ENCODE measurements at regions of chr3 and their contacts with region 1.

Region 1: GRCh38 chr3:37812499-37812896 is 49.2 kb upstream of the CTDSPL start:
- DNase-seq: no peak
- ATAC-seq: no peak
- H3K4me3 ChIP-seq: no peak overlapping the region
- H3K27ac ChIP-seq: no peak overlapping the region
- H3K4me1 ChIP-seq: peaks cover 3% of the 10 kb centered on the region; the same call in 1 of the 2 replicates
- H3K27me3 ChIP-seq: no peaks in the 10 kb centered on the region; a peak in 1 of 4 replicates
- CTCF ChIP-seq: no peak
- EP300 ChIP-seq: no peak
- POLR2A ChIP-seq: no peak
- RAD21 ChIP-seq: no peak

Region 2: GRCh38 chr3:36876181-36876936 is 936.1 kb before region 1 on chr3:
- CTCF ChIA-PET with region 1: no interaction called
- POLR2A ChIA-PET with region 1: no interaction called
- RAD21 ChIA-PET with region 1: no interaction called
- SMC1A ChIA-PET with region 1: no interaction called
- in situ Hi-C with region 1: no loop called
- intact Hi-C with region 1: no loop called
- DNase-seq: peak; percentile 89
- ATAC-seq: peak; percentile 99
- H3K4me3 ChIP-seq: peak overlapping the region; percentile 12; the same call in 1 of the 2 replicates
- H3K27ac ChIP-seq: peak overlapping the region; percentile 45; the same call in 1 of the 2 replicates
- H3K4me1 ChIP-seq: peaks cover 11% of the 10 kb centered on the region
- H3K27me3 ChIP-seq: no peaks in the 10 kb centered on the region
- CTCF ChIP-seq: no peak
- EP300 ChIP-seq: peak; percentile 79 to 84; a peak in 3 of 4 replicates
- POLR2A ChIP-seq: no peak
- RAD21 ChIP-seq: no peak

Region 3: DNA sequence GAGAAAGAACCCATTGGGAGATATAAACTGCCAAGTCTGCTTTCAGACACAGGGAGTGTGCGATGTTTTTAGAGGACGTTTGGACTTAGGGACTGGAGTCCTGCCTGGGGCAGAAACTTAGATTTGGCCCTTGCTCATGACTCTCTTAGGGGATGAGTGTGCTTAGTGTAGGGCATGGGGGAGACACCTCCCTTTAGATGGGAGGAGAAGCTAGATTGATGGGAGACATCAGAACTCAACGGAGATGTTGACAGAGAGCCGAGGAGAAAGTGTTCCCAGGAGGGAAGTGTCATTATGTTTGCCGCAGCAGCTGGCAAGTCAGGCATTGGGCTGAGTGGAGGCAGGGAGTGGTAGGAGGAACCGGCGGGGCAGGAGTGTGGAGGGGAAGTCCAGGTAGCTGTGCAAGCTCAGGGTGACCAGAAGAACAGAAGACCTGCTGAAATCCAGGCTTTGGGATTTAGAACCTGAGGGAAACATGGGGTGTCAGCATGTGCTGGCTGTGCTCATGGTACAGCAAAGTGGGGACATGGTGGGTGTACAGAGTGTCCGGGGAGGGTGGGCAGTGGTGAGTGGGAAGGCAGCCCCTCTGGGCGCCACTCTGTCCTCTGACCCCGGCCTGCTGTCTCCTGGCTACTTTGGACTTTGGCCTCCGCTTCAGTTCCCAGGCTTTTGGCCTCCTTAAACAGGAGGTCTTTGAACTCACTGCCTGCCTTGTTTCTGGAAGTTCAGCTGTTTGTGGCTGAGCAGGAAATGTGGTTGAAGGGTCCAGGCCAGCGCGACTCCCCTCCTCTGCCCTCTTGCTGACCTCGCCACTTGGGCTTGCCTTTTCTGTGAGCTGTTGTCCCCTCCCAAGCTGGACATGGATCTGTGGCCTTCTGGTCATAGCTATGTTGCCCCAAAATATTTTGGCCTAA is 314.1 kb before region 1 on chr3:
- CTCF ChIA-PET with region 1: no interaction called
- POLR2A ChIA-PET with region 1: no interaction called
- RAD21 ChIA-PET with region 1: no interaction called
- SMC1A ChIA-PET with region 1: no interaction called
- in situ Hi-C with region 1: no loop called
- intact Hi-C with region 1: no loop called
- DNase-seq: no peak
- ATAC-seq: no peak
- H3K4me3 ChIP-seq: no peak overlapping the region
- H3K27ac ChIP-seq: no peak overlapping the region
- H3K4me1 ChIP-seq: no peaks in the 10 kb centered on the region
- H3K27me3 ChIP-seq: peaks cover 2 to 5% of the 10 kb centered on the region in 2 experiments; a peak in 2 of 4 replicates
- CTCF ChIP-seq: no peak
- EP300 ChIP-seq: no peak
- POLR2A ChIP-seq: no peak
- RAD21 ChIP-seq: no peak

Region 4: GRCh38 chr3:37736624-37737023 is 75.9 kb before region 1 on chr3:
- CTCF ChIA-PET with region 1: no interaction called
- POLR2A ChIA-PET with region 1: no interaction called
- RAD21 ChIA-PET with region 1: no interaction called
- SMC1A ChIA-PET with region 1: no interaction called
- in situ Hi-C with region 1: no loop called
- intact Hi-C with region 1: no loop called
- DNase-seq: no peak
- ATAC-seq: peak; percentile 81
- H3K4me3 ChIP-seq: no peak overlapping the region
- H3K27ac ChIP-seq: no peak overlapping the region
- H3K4me1 ChIP-seq: no peaks in the 10 kb centered on the region
- H3K27me3 ChIP-seq: peaks cover 0 to 2% of the 10 kb centered on the region in 2 experiments; a peak in 1 of 4 replicates
- CTCF ChIP-seq: no peak
- EP300 ChIP-seq: 0 out of 4 replicates have a peak, but pooled peaks of 1 of the 2 experiments have one; percentile 17
- POLR2A ChIP-seq: no peak
- RAD21 ChIP-seq: no peak

Region 5: GRCh38 chr3:37800022-37800551 is 12.4 kb before region 1 on chr3:
- CTCF ChIA-PET with region 1: interaction called, 13 read pairs
- POLR2A ChIA-PET with region 1: interaction called, 3 read pairs
- RAD21 ChIA-PET with region 1: interaction called, 5 read pairs
- SMC1A ChIA-PET with region 1: interaction called, 16 read pairs
- in situ Hi-C with region 1: no loop called
- intact Hi-C with region 1: no loop called
- DNase-seq: no peak
- ATAC-seq: peak; percentile 23; the same call in 2 of the 3 replicates
- H3K4me3 ChIP-seq: no peak overlapping the region
- H3K27ac ChIP-seq: no peak overlapping the region
- H3K4me1 ChIP-seq: no peaks in the 10 kb centered on the region
- H3K27me3 ChIP-seq: peaks cover 0 to 2% of the 10 kb centered on the region in 2 experiments; a peak in 2 of 4 replicates
- CTCF ChIP-seq: no peak
- EP300 ChIP-seq: no peak
- POLR2A ChIP-seq: no peak
- RAD21 ChIP-seq: no peak